ENCODE measurements at regions of chr1 and their contacts with region 1.

Region 1: GRCh38 chr1:147494998-147495580 is 46.2 kb upstream of the BCL9 start:
- ATAC-seq: peak; percentile 97 to 100 (median 99)
- H3K4me3 ChIP-seq: no peak overlapping the region
- H3K27ac ChIP-seq: no peak overlapping the region
- H3K4me1 ChIP-seq: no peaks in the 10 kb centered on the region

Region 2: DNA sequence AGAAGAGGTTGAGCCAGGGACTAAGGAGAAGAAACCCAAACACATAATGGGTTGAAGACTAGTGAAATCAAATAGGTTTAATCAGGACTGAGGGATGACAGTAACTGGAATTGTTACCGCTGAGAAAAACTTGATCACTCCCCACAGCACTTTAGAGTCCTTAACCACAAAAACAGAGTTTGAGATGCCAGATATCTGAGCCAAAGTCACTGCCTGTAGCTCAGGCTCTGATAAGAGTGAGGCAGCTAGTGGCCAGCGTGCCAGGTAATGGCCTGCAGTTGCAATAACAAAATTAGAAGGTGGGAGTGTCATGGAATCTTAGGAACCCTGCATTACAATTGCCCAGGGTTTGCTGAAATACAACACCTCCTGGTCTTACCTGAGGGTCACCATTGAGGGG is 370.8 kb before region 1 on chr1:
- in situ Hi-C with region 1: no loop called
- ATAC-seq: no peak
- H3K4me3 ChIP-seq: no peak overlapping the region
- H3K27ac ChIP-seq: no peak overlapping the region
- H3K4me1 ChIP-seq: no peaks in the 10 kb centered on the region

Region 3: DNA sequence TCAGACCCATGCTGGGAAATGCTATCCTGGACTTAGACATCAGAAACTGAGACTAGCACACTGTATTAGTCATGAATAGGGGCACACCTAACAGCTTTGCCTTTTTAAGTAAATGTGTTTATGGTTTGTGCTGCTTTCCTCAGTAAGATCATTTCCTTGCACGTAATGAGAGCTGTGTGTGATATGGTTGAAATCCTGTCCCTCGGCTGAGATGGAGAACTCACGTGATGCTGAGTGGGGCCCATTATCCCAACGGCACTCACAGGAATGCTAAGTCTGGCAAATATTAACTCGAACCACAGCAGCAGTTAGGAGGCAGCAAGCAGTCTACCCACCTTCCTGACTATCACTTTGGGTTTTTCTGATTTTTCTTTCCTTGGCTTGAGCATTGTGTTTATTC is 84.4 kb after region 1 on chr1:
- in situ Hi-C with region 1: no loop called
- ATAC-seq: peak; percentile 70 to 98 (median 96)
- H3K4me3 ChIP-seq: peak overlapping the region in 3 of 5 donors; percentile 8 to 21 (median 15)
- H3K27ac ChIP-seq: peak overlapping the region in 1 of 2 donors; percentile 61
- H3K4me1 ChIP-seq: peaks cover 20 to 25% of the 10 kb centered on the region in 2 donors

Region 4: DNA sequence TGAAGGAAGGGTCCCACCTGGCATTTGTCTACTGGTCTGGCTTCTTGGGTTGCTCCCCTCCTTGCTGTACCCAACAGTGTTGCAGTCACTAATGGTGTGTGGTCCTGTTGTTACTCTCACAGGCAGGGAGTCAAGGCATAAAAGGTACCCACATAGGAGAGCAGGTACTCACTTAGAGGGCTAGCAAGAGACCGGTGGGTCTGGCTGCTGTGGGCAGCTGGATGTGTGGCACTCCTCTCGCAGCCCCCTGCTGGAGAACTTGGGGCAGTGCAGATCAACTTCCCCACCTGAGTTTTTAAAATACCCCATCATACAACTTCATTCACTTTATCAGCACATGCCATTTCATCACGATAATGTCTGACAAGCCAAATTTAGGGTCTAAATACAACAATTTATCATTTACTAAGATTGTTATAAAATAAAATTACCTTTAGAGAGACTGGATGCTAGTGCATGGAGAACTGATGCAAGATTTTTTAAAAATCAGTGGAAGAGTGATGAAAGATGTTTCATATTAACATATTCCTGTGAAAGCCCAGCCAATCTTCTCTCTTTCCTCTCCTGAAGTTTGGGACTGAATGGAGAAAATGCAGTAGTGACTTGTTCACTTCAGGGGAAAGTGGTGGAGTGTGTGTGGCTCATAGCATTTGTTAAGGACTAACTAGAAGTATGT is 132.5 kb after region 1 on chr1:
- in situ Hi-C with region 1: loop called in 3 of 9 experiments (anchors 10 to 25 kb)
- ATAC-seq: peak in 6 of 8 experiments; percentile 32 to 74 (median 50)
- H3K4me3 ChIP-seq: no peak overlapping the region
- H3K27ac ChIP-seq: no peak overlapping the region
- H3K4me1 ChIP-seq: peaks cover 0 to 9% of the 10 kb centered on the region in 2 donors

Region 5: GRCh38 chr1:147748676-147749350 is 253.7 kb after region 1 on chr1:
- in situ Hi-C with region 1: no loop called
- ATAC-seq: peak in 1 of 8 experiments; percentile 21
- H3K4me3 ChIP-seq: no peak overlapping the region
- H3K27ac ChIP-seq: no peak overlapping the region
- H3K4me1 ChIP-seq: peaks cover 0 to 10% of the 10 kb centered on the region in 2 donors

Measured in motor neuron (in vitro differentiated cells).